Activated naive CD4-positive, alpha-beta T cell treated with anti-CD3 and anti-CD28 coated beads, Interleukin-2, amount 10 ng/mL, durations not matched to agents 7 days and 5 days (primary cell): ENCODE measurements at regions of chr1 and their contacts with region 1.

Region 1: DNA sequence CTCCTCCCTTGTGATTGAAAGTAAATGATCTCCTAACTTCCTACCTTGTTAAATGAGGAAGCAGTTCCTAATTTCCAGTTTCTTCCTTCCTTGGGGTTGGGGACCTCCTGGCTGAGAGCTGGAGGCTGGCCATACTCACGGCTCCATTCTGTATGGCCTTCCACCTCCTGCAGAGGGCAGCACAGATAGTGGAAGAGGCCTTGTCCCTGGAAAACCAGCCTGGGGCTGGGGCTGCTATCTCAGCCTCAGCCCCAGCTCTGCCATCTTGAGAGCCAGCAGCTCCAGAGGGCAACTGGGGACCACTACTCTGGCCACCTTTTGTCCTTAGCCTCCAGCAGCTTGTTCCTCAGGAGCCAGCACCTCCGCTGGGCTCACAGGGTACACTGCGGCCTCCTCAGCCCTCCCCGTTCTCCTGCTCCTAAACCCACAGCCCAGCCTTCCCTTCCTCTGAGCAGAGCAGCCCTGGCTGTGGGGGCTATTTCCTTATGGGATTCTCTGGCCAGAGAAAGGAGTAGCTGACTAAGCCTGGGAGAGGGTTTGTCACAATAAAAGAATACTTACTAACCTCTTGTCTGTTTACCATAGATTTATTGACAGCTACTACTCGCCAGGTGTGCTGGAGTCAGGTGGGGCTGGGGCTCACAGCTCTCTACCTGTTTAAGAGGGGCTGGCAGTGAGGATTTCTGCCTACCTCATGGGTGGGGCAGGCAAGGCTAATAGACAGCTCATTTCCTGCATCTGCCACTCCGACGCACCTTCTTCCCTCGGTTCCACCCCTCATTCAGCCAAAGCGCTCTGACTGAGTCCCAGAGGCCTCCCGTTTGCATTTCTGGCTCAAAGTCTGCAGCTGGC is 6.3 kb downstream of the TMEM234 start:
- DNase-seq: peak; percentile 79
- H3K4me3 Mint-ChIP-seq: no peak overlapping the region
- H3K27ac Mint-ChIP-seq: peak overlapping the region; percentile 74
- H3K4me1 Mint-ChIP-seq: peaks cover 36% of the 10 kb centered on the region
- H3K27me3 Mint-ChIP-seq: no peaks in the 10 kb centered on the region

Region 2: DNA sequence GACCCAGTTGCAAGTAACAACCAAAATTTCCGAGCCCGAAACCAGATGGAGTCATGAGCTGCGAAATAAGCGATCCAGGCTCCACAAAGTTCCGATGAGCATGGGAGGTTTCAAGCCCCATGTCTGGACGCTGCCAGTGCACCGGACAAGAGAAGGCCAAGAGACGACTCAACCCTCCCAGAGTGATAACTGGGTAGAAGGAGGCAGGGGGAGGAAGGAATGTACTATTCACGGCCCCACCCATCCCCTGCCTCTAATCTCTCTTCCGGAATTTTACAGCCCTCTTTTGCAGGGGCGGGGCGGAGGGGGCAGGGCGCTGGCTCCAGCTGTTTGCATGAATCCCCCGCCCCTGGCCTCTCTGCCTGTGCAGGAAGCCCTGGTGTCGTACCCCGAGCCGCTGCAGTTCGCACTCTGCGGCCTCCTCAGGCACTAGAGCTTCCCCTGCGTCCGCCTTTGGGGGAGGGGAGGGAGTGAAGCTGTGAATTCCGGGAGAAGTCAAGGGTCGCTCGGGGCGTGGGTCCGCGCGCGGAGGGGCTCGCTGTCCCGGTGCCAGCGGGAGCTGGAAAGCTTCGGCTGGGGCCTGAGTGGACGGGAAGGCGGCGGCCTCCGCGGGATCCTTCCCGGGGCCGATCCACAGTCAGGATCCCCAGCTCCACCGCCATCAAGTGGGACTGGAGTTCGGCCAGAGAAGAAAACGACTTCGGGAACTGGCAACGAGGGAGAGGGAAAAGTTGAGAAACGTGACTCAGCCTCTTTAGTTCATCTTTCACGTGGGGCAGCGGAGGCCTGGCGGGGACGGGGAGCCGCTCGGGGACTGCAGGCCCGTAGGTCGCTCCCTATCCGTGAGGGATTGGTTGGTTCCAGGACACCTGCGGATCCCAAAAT is 271.4 kb before region 1 on chr1:
- CTCF ChIA-PET with region 1: no interaction called
- DNase-seq: peak; percentile 96
- H3K4me3 Mint-ChIP-seq: peak overlapping the region; percentile 75
- H3K27ac Mint-ChIP-seq: peak overlapping the region; percentile 98
- H3K4me1 Mint-ChIP-seq: peaks cover 69% of the 10 kb centered on the region
- H3K27me3 Mint-ChIP-seq: no peaks in the 10 kb centered on the region

Region 3: GRCh38 chr1:32200226-32201010 is 15.4 kb before region 1 on chr1 and contains the start of gene CCDC28B:
- CTCF ChIA-PET with region 1: interaction called, 35 read pairs
- DNase-seq: peak; percentile 73
- H3K4me3 Mint-ChIP-seq: peak within 1 kb of the TSS; percentile 84
- H3K27ac Mint-ChIP-seq: peak within 1 kb of the TSS; percentile 95
- H3K4me1 Mint-ChIP-seq: peaks cover 81% of the 10 kb centered on the region
- H3K27me3 Mint-ChIP-seq: no peaks in the 10 kb centered on the region

Region 4: GRCh38 chr1:32240140-32240951 is 24.5 kb after region 1 on chr1:
- CTCF ChIA-PET with region 1: interaction called, 28 read pairs
- DNase-seq: peak; percentile 68
- H3K4me3 Mint-ChIP-seq: peak overlapping the region; percentile 81
- H3K27ac Mint-ChIP-seq: peak overlapping the region; percentile 24
- H3K4me1 Mint-ChIP-seq: peaks cover 32% of the 10 kb centered on the region
- H3K27me3 Mint-ChIP-seq: peaks cover 20% of the 10 kb centered on the region

Region 5: GRCh38 chr1:32291708-32292492 is 76.0 kb after region 1 on chr1 and contains the start of gene HDAC1:
- CTCF ChIA-PET with region 1: interaction called, 14 read pairs
- DNase-seq: peak; percentile 97
- H3K4me3 Mint-ChIP-seq: peak within 1 kb of the TSS; percentile 100
- H3K27ac Mint-ChIP-seq: peak within 1 kb of the TSS; percentile 95
- H3K4me1 Mint-ChIP-seq: peaks cover 55% of the 10 kb centered on the region
- H3K27me3 Mint-ChIP-seq: peaks cover 9% of the 10 kb centered on the region

Region 6: GRCh38 chr1:32372149-32372756 is 156.4 kb after region 1 on chr1:
- CTCF ChIA-PET with region 1: interaction called, 46 read pairs
- DNase-seq: peak; percentile 82
- H3K4me3 Mint-ChIP-seq: no peak overlapping the region
- H3K27ac Mint-ChIP-seq: peak overlapping the region; percentile 51
- H3K4me1 Mint-ChIP-seq: peaks cover 25% of the 10 kb centered on the region
- H3K27me3 Mint-ChIP-seq: no peaks in the 10 kb centered on the region

Region 7: GRCh38 chr1:32413507-32414185 is 197.8 kb after region 1 on chr1:
- CTCF ChIA-PET with region 1: interaction called, 31 read pairs
- DNase-seq: peak; percentile 81
- H3K4me3 Mint-ChIP-seq: no peak overlapping the region
- H3K27ac Mint-ChIP-seq: no peak overlapping the region
- H3K4me1 Mint-ChIP-seq: peaks cover 2% of the 10 kb centered on the region
- H3K27me3 Mint-ChIP-seq: peaks cover 17% of the 10 kb centered on the region